Activated B cell treated with CpG ODN at 0.5 μM for 24 hours (primary cell): ENCODE measurements at regions of chr2 and their contacts with region 1.

Region 1: GRCh38 chr2:74529357-74530238 is at the starts of genes AUP1 and HTRA2:
- DNase-seq: peak; percentile 87
- ATAC-seq: peak; percentile 83
- H3K4me3 Mint-ChIP-seq: peak within 1 kb of the TSS; percentile 97
- H3K27ac Mint-ChIP-seq: peak within 1 kb of the TSS; percentile 96
- H3K4me1 Mint-ChIP-seq: peaks cover 55% of the 10 kb centered on the region
- H3K27me3 Mint-ChIP-seq: no peaks in the 10 kb centered on the region
- CTCF ChIP-seq: no peak
- total RNA-seq, gene AUP1: 167 and 177 TPM in 2 replicates
- total RNA-seq, gene HTRA2: 49.4 and 53.1 TPM in 2 replicates

Region 2: GRCh38 chr2:73985308-73986084 is 544.1 kb before region 1 on chr2:
- CTCF ChIA-PET with region 1: no interaction called
- POLR2A ChIA-PET with region 1: no interaction called
- intact Hi-C with region 1: loop called (anchors 2 kb)
- DNase-seq: peak; percentile 81
- ATAC-seq: peak; percentile 72
- H3K4me3 Mint-ChIP-seq: peak overlapping the region; percentile 90
- H3K27ac Mint-ChIP-seq: peak overlapping the region; percentile 89
- H3K4me1 Mint-ChIP-seq: peaks cover 82% of the 10 kb centered on the region
- H3K27me3 Mint-ChIP-seq: no peaks in the 10 kb centered on the region
- CTCF ChIP-seq: no peak

Region 3: DNA sequence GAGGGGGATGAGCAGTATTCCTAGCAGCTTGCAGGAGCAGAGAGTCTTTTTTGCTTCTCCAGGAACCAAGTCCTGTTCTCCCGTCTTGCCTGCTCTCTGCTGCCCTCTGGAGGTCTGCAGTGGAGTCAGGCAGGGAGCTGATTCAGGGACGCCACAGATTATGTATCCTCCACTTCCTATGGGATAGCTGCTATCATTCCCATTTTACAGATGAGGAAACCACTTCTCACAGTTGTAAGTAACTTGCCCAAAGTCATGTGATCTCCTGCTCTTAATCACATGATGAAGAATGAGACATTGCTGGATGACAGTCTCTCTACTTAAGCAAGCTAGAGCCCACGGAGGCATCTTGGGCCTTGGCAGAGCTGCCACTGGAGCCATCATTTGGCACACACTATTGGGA is 194.7 kb before region 1 on chr2:
- CTCF ChIA-PET with region 1: interaction called, 3 read pairs
- POLR2A ChIA-PET with region 1: no interaction called
- intact Hi-C with region 1: loop called (anchors 5 kb)
- DNase-seq: peak; percentile 62
- ATAC-seq: peak; percentile 66
- H3K4me3 Mint-ChIP-seq: no peak overlapping the region
- H3K27ac Mint-ChIP-seq: no peak overlapping the region
- H3K4me1 Mint-ChIP-seq: no peaks in the 10 kb centered on the region
- H3K27me3 Mint-ChIP-seq: no peaks in the 10 kb centered on the region
- CTCF ChIP-seq: peak; percentile 96

Region 4: GRCh38 chr2:74472086-74472944 is 57.3 kb before region 1 on chr2 and contains the start of gene MRPL53:
- CTCF ChIA-PET with region 1: interaction called, 3 read pairs
- POLR2A ChIA-PET with region 1: interaction called, 11 read pairs
- intact Hi-C with region 1: loop called (anchors 1 kb)
- DNase-seq: peak; percentile 91
- ATAC-seq: peak; percentile 89
- H3K4me3 Mint-ChIP-seq: peak within 1 kb of the TSS; percentile 97
- H3K27ac Mint-ChIP-seq: peak within 1 kb of the TSS; percentile 97
- H3K4me1 Mint-ChIP-seq: peaks cover 23% of the 10 kb centered on the region
- H3K27me3 Mint-ChIP-seq: no peaks in the 10 kb centered on the region
- CTCF ChIP-seq: no peak
- total RNA-seq, gene MRPL53: 86.9 and 98.8 TPM in 2 replicates

Region 5: GRCh38 chr2:74515981-74516633 is 13.5 kb before region 1 on chr2:
- CTCF ChIA-PET with region 1: no interaction called
- POLR2A ChIA-PET with region 1: interaction called, 13 read pairs
- intact Hi-C with region 1: loop called (anchors 1 kb)
- DNase-seq: peak; percentile 66
- ATAC-seq: peak; percentile 87
- H3K4me3 Mint-ChIP-seq: peak overlapping the region; percentile 78
- H3K27ac Mint-ChIP-seq: no peak overlapping the region
- H3K4me1 Mint-ChIP-seq: peaks cover 28% of the 10 kb centered on the region
- H3K27me3 Mint-ChIP-seq: peaks cover 57% of the 10 kb centered on the region
- CTCF ChIP-seq: no peak

Region 6: DNA sequence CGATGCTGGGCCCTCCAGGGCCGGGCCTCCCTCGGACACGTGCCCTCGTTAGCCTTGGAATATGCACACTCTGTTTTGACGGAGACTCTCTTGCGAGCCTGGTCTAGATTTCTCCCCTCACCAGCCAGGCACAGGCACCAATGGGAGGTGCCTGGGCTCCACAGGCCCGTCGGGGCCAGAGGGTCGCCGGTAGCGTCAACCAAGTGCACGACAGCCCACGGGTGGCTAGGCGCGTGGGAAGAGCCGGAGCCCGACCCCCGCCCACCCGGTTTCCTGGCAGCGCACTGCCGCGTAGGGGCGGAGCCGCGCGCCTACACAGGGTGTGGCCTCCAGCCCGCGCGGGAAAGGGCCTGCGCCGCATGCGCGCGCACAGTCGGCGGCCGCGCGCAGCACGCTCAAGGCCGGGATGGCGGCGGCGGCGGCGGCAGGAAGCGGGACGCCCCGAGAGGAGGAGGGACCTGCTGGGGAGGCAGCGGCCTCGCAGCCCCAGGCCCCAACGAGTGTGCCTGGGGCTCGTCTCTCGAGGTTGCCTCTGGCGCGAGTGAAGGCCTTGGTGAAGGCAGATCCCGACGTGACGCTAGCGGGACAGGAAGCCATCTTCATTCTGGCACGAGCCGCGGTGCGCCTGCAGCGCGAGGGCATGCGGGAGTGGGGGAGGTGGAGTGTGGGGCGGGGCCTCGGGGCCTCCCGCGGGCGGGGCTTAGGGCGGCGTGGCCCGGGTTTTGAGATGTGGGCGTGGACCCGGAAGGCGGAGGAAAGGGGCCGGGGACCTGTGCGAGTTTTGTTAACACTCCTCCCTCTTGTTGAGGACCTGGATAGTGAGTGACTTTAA is 428.9 kb after region 1 on chr2 and contains the start of gene POLE4:
- CTCF ChIA-PET with region 1: no interaction called
- POLR2A ChIA-PET with region 1: no interaction called
- intact Hi-C with region 1: no loop called
- DNase-seq: peak; percentile 95
- ATAC-seq: peak; percentile 92
- H3K4me3 Mint-ChIP-seq: peak within 1 kb of the TSS; percentile 88
- H3K27ac Mint-ChIP-seq: peak within 1 kb of the TSS; percentile 94
- H3K4me1 Mint-ChIP-seq: peaks cover 72% of the 10 kb centered on the region
- H3K27me3 Mint-ChIP-seq: no peaks in the 10 kb centered on the region
- CTCF ChIP-seq: no peak
- total RNA-seq, gene POLE4: 61.5 and 73.7 TPM in 2 replicates